ENCODE measurements at regions of chr6 and their contacts with region 1.

Region 1: DNA sequence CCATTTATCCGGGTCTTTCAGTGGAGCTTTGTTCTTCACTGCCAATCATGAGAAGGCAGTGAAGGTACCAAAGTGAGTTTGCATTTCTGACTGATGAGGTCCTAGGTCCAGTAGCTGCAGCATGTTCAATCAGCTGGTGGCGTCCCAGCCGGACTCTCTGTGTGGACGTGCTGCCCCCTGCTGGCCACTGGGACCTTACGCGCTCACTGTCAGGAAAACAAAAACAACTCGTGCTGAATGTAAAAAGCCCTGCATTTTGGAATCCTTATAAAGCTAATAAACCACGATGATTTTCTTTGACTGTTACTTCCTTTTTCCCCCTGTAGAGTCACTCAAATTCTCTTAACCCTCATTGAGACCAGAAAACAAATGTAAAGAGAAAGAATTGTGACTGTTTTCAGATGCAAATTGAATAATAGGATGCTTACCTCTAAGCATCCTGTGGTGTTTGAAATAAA is 4.9 kb upstream of the CD24 start:
- DNase-seq: peak; percentile 76
- ATAC-seq: peak; percentile 84
- H3K4me3 ChIP-seq: no peak overlapping the region
- H3K27ac ChIP-seq: no peak overlapping the region
- H3K4me1 ChIP-seq: no peaks in the 10 kb centered on the region
- H3K27me3 ChIP-seq: peaks cover 33% of the 10 kb centered on the region
- CTCF ChIP-seq: peak; percentile 97
- POLR2A ChIP-seq: no peak
- RAD21 ChIP-seq: peak; percentile 94

Region 2: DNA sequence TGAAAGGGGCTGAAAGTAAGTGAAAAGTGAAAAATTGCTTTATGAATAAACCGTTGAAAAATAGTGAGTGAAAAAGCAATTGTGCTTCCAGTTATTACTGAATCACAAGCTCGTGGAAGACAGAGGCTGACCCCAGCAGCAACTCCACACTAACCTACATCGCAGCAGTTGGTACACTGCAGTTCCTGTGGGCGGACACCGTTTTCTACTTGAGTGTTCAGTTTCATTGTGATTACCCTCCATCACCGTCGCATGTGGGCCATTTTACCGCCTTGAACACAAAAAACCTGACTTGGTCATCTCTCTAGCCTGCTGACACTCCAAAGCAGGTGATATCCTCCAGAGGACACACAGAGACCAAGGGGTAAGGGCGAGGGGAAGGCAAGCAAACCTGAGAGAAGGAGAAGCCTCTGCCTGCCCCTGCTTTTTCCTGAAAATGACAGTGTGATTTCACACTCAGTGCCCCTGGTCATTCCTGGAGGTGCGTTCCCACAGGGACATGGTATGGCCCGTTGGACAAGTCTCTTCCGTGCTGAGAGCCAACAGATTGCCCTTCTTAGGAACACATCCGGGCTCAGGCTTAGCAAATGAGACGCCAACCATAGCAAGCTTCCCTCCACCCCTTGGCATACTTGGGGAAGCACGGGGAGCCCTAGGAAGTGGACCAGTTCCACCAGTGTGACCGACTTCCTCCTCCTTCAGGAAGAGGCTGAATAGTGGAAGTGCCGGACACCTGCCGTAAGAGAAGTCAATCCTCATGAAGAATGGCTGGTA is 864.8 kb before region 1 on chr6:
- CTCF ChIA-PET with region 1: no interaction called
- POLR2A ChIA-PET with region 1: no interaction called
- dilution Hi-C with region 1: no loop called
- in situ Hi-C with region 1: no loop called
- intact Hi-C with region 1: no loop called
- DNase-seq: no peak
- ATAC-seq: no peak
- H3K4me3 ChIP-seq: no peak overlapping the region
- H3K27ac ChIP-seq: no peak overlapping the region
- H3K4me1 ChIP-seq: peaks cover 4% of the 10 kb centered on the region; the same call in 1 of the 2 replicates
- H3K27me3 ChIP-seq: no peaks in the 10 kb centered on the region
- CTCF ChIP-seq: no peak
- POLR2A ChIP-seq: no peak
- RAD21 ChIP-seq: no peak

Region 3: GRCh38 chr6:106325336-106326178 is 653.9 kb before region 1 on chr6 and contains the start of gene ATG5:
- CTCF ChIA-PET with region 1: no interaction called
- POLR2A ChIA-PET with region 1: no interaction called
- dilution Hi-C with region 1: no loop called
- in situ Hi-C with region 1: loop called (anchors 25 kb)
- intact Hi-C with region 1: no loop called
- DNase-seq: peak; percentile 99
- ATAC-seq: peak; percentile 96
- H3K4me3 ChIP-seq: peak within 1 kb of the TSS; percentile 72
- H3K27ac ChIP-seq: peak within 1 kb of the TSS; percentile 69
- H3K4me1 ChIP-seq: no peaks in the 10 kb centered on the region
- H3K27me3 ChIP-seq: peaks cover 16% of the 10 kb centered on the region
- CTCF ChIP-seq: no peak
- POLR2A ChIP-seq: peak; percentile 72; the same call in 1 of the 2 replicates
- RAD21 ChIP-seq: no peak; the same call in 1 of the 2 replicates
- total RNA-seq, gene ATG5: 28.0 and 44.7 TPM in 2 replicates

Region 4: GRCh38 chr6:106360410-106360988 is 619.0 kb before region 1 on chr6 and contains the start of gene CRYBG1:
- CTCF ChIA-PET with region 1: no interaction called
- POLR2A ChIA-PET with region 1: no interaction called
- dilution Hi-C with region 1: no loop called
- in situ Hi-C with region 1: no loop called
- intact Hi-C with region 1: loop called (anchors 1 kb)
- DNase-seq: no peak
- ATAC-seq: peak; percentile 93
- H3K4me3 ChIP-seq: peak within 1 kb of the TSS; percentile 9; the same call in 1 of the 2 replicates
- H3K27ac ChIP-seq: no peak within 1 kb of the TSS
- H3K4me1 ChIP-seq: peaks cover 3% of the 10 kb centered on the region; the same call in 1 of the 2 replicates
- H3K27me3 ChIP-seq: peaks cover 28% of the 10 kb centered on the region
- CTCF ChIP-seq: peak; percentile 56
- POLR2A ChIP-seq: no peak
- RAD21 ChIP-seq: no peak
- total RNA-seq, gene CRYBG1: 1.1 TPM in 2 replicates

Region 5: GRCh38 chr6:106473812-106474211 is 505.6 kb before region 1 on chr6:
- CTCF ChIA-PET with region 1: no interaction called
- POLR2A ChIA-PET with region 1: no interaction called
- dilution Hi-C with region 1: loop called (anchors 25 kb)
- in situ Hi-C with region 1: no loop called
- intact Hi-C with region 1: no loop called
- DNase-seq: peak; percentile 80
- ATAC-seq: peak; percentile 74
- H3K4me3 ChIP-seq: no peak overlapping the region
- H3K27ac ChIP-seq: no peak overlapping the region
- H3K4me1 ChIP-seq: peaks cover 4% of the 10 kb centered on the region; the same call in 1 of the 2 replicates
- H3K27me3 ChIP-seq: peaks cover 13% of the 10 kb centered on the region
- CTCF ChIP-seq: no peak
- POLR2A ChIP-seq: no peak
- RAD21 ChIP-seq: no peak

Region 6: DNA sequence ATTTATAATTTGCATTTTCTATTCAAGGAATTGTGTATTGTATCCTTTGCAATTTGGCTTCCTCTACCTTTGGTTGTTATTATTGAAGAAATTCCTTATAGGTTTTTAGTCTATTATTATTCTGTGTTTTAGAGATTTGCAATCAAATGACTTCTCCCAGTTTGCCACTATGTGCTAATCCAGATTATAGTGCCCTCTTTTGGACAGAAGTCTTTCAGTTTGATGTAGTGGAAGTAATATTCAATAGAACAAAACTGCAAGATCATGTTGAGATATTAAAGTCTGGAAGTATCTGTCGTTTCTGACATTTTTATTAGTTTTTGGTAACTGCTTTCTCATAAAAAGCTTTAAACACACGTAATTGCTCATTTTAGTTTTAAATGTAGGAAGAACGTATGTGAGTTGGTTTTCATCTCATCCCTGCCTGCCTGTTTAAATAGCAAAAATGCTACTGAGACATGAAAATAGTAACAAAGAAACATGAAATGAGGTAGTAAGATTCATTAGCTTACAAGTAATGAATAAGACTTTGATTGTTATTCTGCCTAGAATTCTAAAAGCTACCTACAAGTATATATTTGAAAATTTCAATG is 423.0 kb before region 1 on chr6:
- CTCF ChIA-PET with region 1: interaction called, 10 read pairs
- POLR2A ChIA-PET with region 1: no interaction called
- dilution Hi-C with region 1: no loop called
- in situ Hi-C with region 1: loop called (anchors 10 kb)
- intact Hi-C with region 1: no loop called
- DNase-seq: peak; percentile 47
- ATAC-seq: peak; percentile 49; the same call in 1 of the 2 replicates
- H3K4me3 ChIP-seq: no peak overlapping the region
- H3K27ac ChIP-seq: no peak overlapping the region
- H3K4me1 ChIP-seq: no peaks in the 10 kb centered on the region; the same call in 1 of the 2 replicates
- H3K27me3 ChIP-seq: no peaks in the 10 kb centered on the region
- CTCF ChIP-seq: peak; percentile 54
- POLR2A ChIP-seq: no peak
- RAD21 ChIP-seq: peak; percentile 61